PC-3 (cell line): ENCODE measurements at regions of chr10 and their contacts with region 1.

Region 1: DNA sequence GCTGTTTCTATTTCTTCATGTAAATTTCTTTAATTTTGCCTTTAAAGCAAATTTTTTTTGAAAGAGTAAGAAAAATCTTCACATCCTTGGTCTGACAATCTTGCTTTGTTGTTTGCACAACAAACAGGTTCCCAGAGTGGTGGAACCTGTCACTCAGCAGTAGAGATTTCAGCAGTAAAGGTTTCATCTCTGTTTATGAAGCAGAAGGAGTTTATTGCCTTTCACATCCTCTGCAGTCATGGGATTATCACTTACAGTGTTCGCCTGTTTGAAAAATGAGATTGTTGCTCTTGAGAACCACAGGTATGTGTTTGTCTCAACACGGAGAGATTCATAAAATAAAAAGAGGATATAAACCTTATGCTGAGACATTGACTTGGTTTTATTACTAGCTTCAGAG is 342.6 kb downstream of the IPMK start:
- DNase-seq: peak; percentile 89
- ATAC-seq: peak; percentile 90
- H3K4me3 ChIP-seq: no peak overlapping the region
- H3K27ac ChIP-seq: peak overlapping the region; percentile 29
- H3K4me1 ChIP-seq: peaks cover 26% of the 10 kb centered on the region
- H3K27me3 ChIP-seq: no peaks in the 10 kb centered on the region
- CTCF ChIP-seq: no peak

Region 2: GRCh38 chr10:57844387-57844998 is 80.6 kb before region 1 on chr10:
- CTCF ChIA-PET with region 1: no interaction called
- POLR2A ChIA-PET with region 1: no interaction called
- intact Hi-C with region 1: no loop called
- DNase-seq: no peak
- ATAC-seq: no peak
- H3K4me3 ChIP-seq: no peak overlapping the region
- H3K27ac ChIP-seq: no peak overlapping the region
- H3K4me1 ChIP-seq: no peaks in the 10 kb centered on the region
- H3K27me3 ChIP-seq: no peaks in the 10 kb centered on the region
- CTCF ChIP-seq: no peak

Region 3: GRCh38 chr10:57964351-57964750 is 39.3 kb after region 1 on chr10:
- CTCF ChIA-PET with region 1: no interaction called
- POLR2A ChIA-PET with region 1: no interaction called
- intact Hi-C with region 1: loop called (anchors 1 kb)
- DNase-seq: peak; percentile 94
- ATAC-seq: peak; percentile 96
- H3K4me3 ChIP-seq: no peak overlapping the region
- H3K27ac ChIP-seq: 0 out of 2 replicates have a peak overlapping the region, but pooled peaks have one; percentile 1
- H3K4me1 ChIP-seq: peaks cover 19% of the 10 kb centered on the region
- H3K27me3 ChIP-seq: no peaks in the 10 kb centered on the region
- CTCF ChIP-seq: no peak

Region 4: GRCh38 chr10:58003945-58004344 is 78.9 kb after region 1 on chr10:
- CTCF ChIA-PET with region 1: no interaction called
- POLR2A ChIA-PET with region 1: no interaction called
- intact Hi-C with region 1: no loop called
- DNase-seq: no peak
- ATAC-seq: no peak
- H3K4me3 ChIP-seq: no peak overlapping the region
- H3K27ac ChIP-seq: no peak overlapping the region
- H3K4me1 ChIP-seq: no peaks in the 10 kb centered on the region
- H3K27me3 ChIP-seq: no peaks in the 10 kb centered on the region
- CTCF ChIP-seq: no peak